ENCODE measurements at regions of chr12 and their contacts with region 1.

Region 1: DNA sequence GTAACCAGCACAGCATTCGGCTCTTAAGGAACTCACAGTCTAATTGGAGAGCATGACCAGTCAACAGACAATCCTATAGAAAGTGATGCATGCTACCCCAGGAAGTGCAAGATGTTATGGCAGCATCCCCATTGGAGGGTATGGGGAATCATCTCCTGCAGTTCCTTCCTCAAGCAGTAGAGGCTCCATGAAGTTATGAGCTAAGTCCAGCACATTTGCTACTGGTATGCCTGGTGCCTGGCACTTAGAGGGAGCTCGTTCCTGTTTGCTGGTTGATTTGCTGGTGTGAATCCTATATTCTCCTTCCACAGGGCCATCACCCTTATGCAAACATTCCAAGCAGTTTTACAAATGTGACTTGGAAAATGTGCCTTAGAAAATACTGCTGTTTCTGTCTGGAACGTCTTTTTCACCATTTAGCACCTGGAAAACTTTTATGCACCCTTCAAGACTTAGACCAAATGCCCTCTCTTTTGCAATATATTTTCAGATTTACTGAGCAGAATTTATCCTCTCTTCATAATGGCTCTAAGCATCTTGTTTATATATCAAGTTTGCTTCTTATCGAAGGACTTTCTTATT is 136.1 kb upstream of the WSCD2 start:
- DNase-seq: no peak
- H3K4me3 Mint-ChIP-seq: no peak overlapping the region
- H3K27ac Mint-ChIP-seq: no peak overlapping the region
- H3K4me1 Mint-ChIP-seq: no peaks in the 10 kb centered on the region
- H3K27me3 Mint-ChIP-seq: peaks cover 20% of the 10 kb centered on the region

Region 2: GRCh38 chr12:107917912-107918800 is 74.8 kb before region 1 on chr12:
- CTCF ChIA-PET with region 1: interaction called, 4 read pairs
- intact Hi-C with region 1: loop called (anchors 2 kb)
- DNase-seq: peak; percentile 18
- H3K4me3 Mint-ChIP-seq: no peak overlapping the region
- H3K27ac Mint-ChIP-seq: no peak overlapping the region
- H3K4me1 Mint-ChIP-seq: no peaks in the 10 kb centered on the region
- H3K27me3 Mint-ChIP-seq: peaks cover 32% of the 10 kb centered on the region

Region 3: DNA sequence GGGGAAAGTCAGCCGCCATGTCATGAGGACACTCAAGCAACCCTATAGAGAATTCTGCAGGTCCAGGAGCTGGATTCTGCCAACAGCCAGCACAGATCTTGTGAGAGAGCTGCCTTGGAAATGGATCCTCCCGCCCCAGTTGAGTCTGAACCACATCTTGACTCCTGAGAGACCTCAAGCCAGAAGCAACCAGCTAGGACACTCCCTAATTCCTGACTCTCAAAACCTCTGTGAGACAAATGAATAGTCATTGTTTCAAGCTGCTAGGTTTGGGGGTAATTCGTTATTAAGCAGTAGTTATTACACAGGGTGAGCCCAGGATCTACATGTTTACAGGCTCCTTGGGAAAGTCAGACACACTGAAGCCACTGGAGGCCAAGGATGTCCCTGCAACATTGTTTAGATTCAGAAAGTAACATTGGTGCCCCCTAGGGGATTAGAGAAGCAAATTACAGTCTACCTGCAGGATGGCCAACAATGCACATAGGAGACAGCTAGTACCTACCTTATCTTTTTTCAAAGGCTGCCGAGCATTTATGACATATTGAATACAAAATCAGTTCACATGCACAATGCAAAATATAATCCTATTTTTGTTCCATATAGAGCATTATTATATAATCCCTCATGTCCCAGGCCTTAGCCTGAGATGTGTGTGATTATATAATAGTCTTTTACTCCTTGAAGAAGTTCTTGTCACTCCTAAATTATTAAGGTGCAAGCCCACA is 464.2 kb after region 1 on chr12:
- CTCF ChIA-PET with region 1: no interaction called
- intact Hi-C with region 1: loop called (anchors 2 kb)
- DNase-seq: peak; percentile 6
- H3K4me3 Mint-ChIP-seq: no peak overlapping the region
- H3K27ac Mint-ChIP-seq: no peak overlapping the region
- H3K4me1 Mint-ChIP-seq: no peaks in the 10 kb centered on the region
- H3K27me3 Mint-ChIP-seq: peaks cover 18% of the 10 kb centered on the region

Measured in activated naive CD4-positive, alpha-beta T cell treated with anti-CD3 and anti-CD28 coated beads for 36 hours (primary cell).